ENCODE measurements at regions of chr18 and their contacts with region 1.

Region 1: GRCh38 chr18:11937874-11938478 is 29.9 kb upstream of the MPPE1 start:
- DNase-seq: peak; percentile 47
- ATAC-seq: peak; percentile 62
- H3K4me3 Mint-ChIP-seq: no peak overlapping the region
- H3K27ac Mint-ChIP-seq: no peak overlapping the region
- H3K4me1 Mint-ChIP-seq: no peaks in the 10 kb centered on the region
- H3K27me3 Mint-ChIP-seq: no peaks in the 10 kb centered on the region
- CTCF ChIP-seq: peak; percentile 34

Region 2: GRCh38 chr18:11887305-11888262 is 50.4 kb before region 1 on chr18:
- CTCF ChIA-PET with region 1: no interaction called
- POLR2A ChIA-PET with region 1: no interaction called
- intact Hi-C with region 1: no loop called
- DNase-seq: no peak
- ATAC-seq: no peak
- H3K4me3 Mint-ChIP-seq: no peak overlapping the region
- H3K27ac Mint-ChIP-seq: no peak overlapping the region
- H3K4me1 Mint-ChIP-seq: peaks cover 31% of the 10 kb centered on the region
- H3K27me3 Mint-ChIP-seq: no peaks in the 10 kb centered on the region
- CTCF ChIP-seq: no peak

Region 3: GRCh38 chr18:11972371-11973174 is 34.6 kb after region 1 on chr18:
- CTCF ChIA-PET with region 1: no interaction called
- POLR2A ChIA-PET with region 1: no interaction called
- intact Hi-C with region 1: no loop called
- DNase-seq: no peak
- ATAC-seq: no peak
- H3K4me3 Mint-ChIP-seq: no peak overlapping the region
- H3K27ac Mint-ChIP-seq: no peak overlapping the region
- H3K4me1 Mint-ChIP-seq: no peaks in the 10 kb centered on the region
- H3K27me3 Mint-ChIP-seq: no peaks in the 10 kb centered on the region
- CTCF ChIP-seq: no peak

Region 4: GRCh38 chr18:12038639-12039417 is 100.9 kb after region 1 on chr18:
- CTCF ChIA-PET with region 1: interaction called, 117 read pairs
- POLR2A ChIA-PET with region 1: interaction called, 10 read pairs
- intact Hi-C with region 1: loop called (anchors 1 kb)
- DNase-seq: peak; percentile 76
- ATAC-seq: peak; percentile 98
- H3K4me3 Mint-ChIP-seq: peak overlapping the region; percentile 76
- H3K27ac Mint-ChIP-seq: no peak overlapping the region
- H3K4me1 Mint-ChIP-seq: peaks cover 12% of the 10 kb centered on the region
- H3K27me3 Mint-ChIP-seq: peaks cover 7% of the 10 kb centered on the region
- CTCF ChIP-seq: peak; percentile 83